H1 (cell line): ENCODE measurements at regions of chr14 and their contacts with region 1.

Region 1: DNA sequence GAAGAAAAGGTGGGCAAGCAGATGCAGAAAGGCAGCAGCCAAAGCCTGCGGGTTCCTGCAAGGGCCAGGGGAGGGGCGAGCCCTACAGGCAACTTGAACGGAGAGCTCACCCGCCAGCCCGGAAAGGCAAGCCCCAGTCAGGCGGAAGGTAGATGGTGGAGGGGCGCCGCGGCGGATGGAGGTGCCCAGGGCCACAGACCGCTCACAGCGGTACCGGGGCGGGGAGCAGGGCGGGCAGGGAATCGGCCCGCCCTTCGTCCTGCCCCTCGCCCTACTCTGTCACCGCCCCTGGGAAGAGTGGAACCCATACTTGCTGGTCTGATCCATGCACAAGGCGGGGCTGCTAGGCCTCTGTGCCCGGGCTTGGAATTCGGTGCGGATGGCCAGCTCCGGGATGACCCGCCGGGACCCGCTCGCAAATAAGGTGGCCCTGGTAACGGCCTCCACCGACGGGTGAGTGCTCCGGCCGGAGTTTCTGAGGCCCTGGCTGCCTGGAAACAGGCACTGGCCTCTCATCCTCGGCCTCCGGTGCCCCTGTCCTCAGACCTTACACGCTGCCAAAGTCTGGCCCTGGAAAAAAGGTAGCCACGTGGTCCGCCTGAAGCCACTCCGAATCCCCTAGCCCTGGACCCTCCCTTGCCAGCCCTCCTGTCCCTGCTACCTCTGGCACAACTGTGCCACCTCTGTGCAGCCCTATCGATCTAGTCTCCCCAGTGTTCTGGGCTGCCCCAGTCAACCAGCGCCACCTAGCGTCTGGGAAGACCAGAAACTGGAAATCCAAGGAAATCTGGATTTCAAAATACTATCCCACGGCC is at the start of gene DHRS4:
- DNase-seq: peak; percentile 59 to 86
- H3K4me3 ChIP-seq: peak within 1 kb of the TSS; percentile 72 to 90 (median 86)
- H3K27ac ChIP-seq: peak within 1 kb of the TSS; percentile 69
- H3K4me1 ChIP-seq: peaks cover 0 to 7% (median under 1%) of the 10 kb centered on the region in 4 experiments; a peak in 2 of 7 replicates
- H3K27me3 ChIP-seq: no peaks in the 10 kb centered on the region
- CTCF ChIP-seq: peak; percentile 79 to 89 (median 87)
- EP300 ChIP-seq: no peak
- POLR2A ChIP-seq: peak in 1 of 2 experiments; percentile 78; a peak in 2 of 3 replicates
- RAD21 ChIP-seq: peak; percentile 71 to 82
- total RNA-seq, gene DHRS4: 16.2 and 19.2 TPM in 2 replicates

Region 2: GRCh38 chr14:23937203-23937602 is 16.5 kb before region 1 on chr14:
- CTCF ChIA-PET with region 1: interaction called, 11 read pairs
- POLR2A ChIA-PET with region 1: no interaction called
- DNase-seq: no peak
- H3K4me3 ChIP-seq: no peak overlapping the region
- H3K27ac ChIP-seq: no peak overlapping the region
- H3K4me1 ChIP-seq: no peaks in the 10 kb centered on the region
- H3K27me3 ChIP-seq: no peaks in the 10 kb centered on the region
- CTCF ChIP-seq: no peak
- EP300 ChIP-seq: no peak
- POLR2A ChIP-seq: no peak
- RAD21 ChIP-seq: no peak